AG04449 (cell line): ENCODE measurements at regions of chr14 and their contacts with region 1.

Region 1: DNA sequence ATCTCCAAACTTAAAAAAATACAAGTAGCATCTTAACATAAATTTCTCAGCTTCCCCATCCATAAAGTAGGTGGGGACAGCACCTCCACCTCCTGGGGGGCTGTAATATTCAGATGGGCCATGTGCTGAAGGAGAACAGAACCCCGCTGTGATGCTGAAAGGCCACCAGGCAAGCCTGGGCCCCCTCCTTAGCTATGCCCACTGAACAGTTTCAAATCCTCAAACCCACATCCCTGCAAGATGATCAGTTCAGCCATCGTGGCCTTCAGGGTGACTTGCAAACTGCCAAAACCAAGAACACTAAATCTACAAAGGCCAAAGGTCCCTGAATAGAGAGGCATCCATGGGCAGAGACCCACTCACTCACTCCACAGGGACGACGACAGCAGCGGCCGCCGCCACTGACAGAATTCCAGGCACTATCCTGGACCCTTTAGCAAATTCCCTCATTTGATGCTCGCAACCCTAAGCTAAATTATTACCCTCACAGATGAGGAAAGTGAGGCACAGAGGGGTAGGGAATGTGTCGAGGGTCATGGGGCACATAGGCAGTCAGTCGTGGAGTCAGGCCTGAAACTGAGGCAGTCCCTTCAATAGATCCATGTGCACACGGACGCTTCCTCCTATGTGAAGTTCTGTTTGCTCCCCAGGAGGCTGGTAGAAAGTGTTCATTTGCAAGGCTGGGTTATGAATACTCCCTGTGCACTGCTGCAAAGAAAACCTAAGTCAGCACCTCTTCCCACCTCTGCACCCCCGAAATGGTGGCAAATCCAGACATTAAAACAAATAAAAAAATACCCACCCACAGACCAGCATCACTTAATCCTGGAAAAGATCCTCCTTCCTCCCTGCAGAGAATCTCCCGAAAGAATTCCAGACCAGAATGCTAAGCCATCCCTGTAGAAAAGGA is 5.9 kb downstream of the ITPK1 start:
- DNase-seq: no peak
- H3K4me3 ChIP-seq: no peak overlapping the region
- CTCF ChIP-seq: no peak

Region 2: DNA sequence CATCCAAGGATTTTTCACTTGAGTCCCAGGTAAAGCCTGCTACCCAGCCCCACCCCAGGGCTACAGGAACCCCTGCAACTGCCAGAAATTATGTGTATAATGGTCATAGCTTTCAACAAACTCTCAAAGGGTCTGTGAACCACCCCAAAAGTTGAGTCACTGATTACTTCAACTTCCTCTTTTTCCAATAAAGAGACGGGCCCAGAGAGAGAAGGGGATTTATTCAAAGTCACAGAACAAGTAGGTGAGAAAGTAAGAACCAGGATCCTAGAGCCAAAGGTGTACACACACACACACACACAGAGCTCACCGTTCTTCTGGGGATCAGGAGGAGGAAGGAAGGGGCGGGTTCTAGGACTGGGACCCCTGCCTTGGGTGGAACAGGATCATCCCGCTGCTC is 10.7 kb after region 1 on chr14:
- CTCF ChIA-PET with region 1: interaction called, 326 read pairs
- POLR2A ChIA-PET with region 1: no interaction called
- DNase-seq: no peak
- H3K4me3 ChIP-seq: no peak overlapping the region
- CTCF ChIP-seq: no peak